Activated T-helper 2 cell treated with anti-CD3 and anti-CD28 coated beads, Interferon-gamma antibody, Interleukin-2, Interleukin-4, amounts not matched to agents 10 μg/mL and 5 μg/mL and 100 μg/mL, durations not matched to agents 14 hours and 24 hours and 36 hours (primary cell): ENCODE measurements at regions of chr1 and their contacts with region 1.

Region 1: GRCh38 chr1:203026031-203026989 is at the start of gene PPFIA4:
- DNase-seq: peak; percentile 87
- H3K4me3 Mint-ChIP-seq: peak within 1 kb of the TSS; percentile 82
- H3K27ac Mint-ChIP-seq: peak within 1 kb of the TSS; percentile 72
- H3K4me1 Mint-ChIP-seq: peaks cover 22% of the 10 kb centered on the region
- H3K27me3 Mint-ChIP-seq: no peaks in the 10 kb centered on the region
- total RNA-seq, gene PPFIA4: 33.4 and 35.1 TPM in 2 replicates

Region 2: DNA sequence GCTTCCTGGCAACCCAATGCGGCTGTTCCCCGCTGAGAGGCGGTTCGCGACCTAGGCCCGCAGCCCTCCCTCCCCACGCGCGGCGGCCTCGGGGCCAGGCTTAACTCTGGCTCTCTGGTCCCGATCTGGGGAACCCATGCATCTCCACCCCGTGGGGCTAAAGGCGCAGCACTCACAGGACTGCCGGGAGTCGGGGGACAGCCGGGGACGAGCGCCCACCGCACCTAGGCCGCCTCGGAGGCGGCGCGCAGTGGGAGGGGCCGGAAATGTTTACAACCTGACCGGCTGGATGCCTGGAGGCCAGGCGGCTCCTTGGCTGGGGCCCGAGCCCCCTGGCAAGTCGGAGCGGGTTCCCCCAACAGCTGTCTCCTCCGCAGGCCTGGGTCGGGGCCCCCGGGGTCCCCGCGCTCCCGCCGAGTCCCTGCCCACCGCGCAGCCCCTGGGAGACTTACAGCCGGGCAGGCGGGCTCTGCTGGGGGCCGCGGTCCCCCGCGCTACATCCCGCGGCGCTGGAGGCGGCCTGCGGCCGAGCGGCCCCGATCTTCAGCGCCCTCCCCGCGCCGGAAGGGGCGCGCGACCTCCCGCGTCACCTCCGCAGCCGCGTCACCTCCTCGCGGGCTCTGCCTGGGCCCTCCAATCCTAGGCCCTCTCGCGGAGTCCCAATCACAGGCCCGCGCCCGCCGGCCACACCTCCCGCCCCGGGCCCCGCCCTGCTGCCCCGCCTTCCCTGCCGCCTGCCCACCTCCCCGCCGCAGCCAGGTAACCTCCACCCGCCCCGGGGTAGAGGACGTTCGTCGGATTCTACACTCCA is 68.4 kb before region 1 on chr1 and contains the start of gene ADIPOR1:
- intact Hi-C with region 1: loop called (anchors 1 kb)
- DNase-seq: peak; percentile 92
- H3K4me3 Mint-ChIP-seq: peak within 1 kb of the TSS; percentile 94
- H3K27ac Mint-ChIP-seq: peak within 1 kb of the TSS; percentile 58
- H3K4me1 Mint-ChIP-seq: peaks cover 29% of the 10 kb centered on the region
- H3K27me3 Mint-ChIP-seq: no peaks in the 10 kb centered on the region
- total RNA-seq, gene ADIPOR1: 79.1 and 79.2 TPM in 2 replicates